Left cardiac atrium (tissue), 4 donors: ENCODE measurements at regions of chr20 and their contacts with region 1.

Region 1: DNA sequence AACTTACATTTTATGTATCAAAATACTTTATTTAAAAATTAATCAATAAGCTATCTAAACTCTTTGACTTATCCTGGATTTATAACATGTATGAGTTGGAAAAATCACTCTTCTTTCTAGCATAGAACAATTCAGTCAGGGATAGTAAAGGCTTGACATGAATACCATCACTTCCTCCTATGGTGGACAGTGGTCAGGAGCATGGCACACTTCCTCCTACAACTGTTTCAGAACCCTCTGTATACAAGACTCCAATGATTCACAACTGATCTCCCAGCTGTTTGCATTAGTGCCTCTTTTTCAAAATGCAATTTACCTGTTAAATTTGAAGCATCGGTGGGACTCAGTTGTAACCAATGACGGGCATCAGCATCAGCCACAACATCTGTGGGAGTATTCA is 129.7 kb downstream of the RALGAPA2 start:
- DNase-seq: no peak
- ATAC-seq: no peak

Region 2: DNA sequence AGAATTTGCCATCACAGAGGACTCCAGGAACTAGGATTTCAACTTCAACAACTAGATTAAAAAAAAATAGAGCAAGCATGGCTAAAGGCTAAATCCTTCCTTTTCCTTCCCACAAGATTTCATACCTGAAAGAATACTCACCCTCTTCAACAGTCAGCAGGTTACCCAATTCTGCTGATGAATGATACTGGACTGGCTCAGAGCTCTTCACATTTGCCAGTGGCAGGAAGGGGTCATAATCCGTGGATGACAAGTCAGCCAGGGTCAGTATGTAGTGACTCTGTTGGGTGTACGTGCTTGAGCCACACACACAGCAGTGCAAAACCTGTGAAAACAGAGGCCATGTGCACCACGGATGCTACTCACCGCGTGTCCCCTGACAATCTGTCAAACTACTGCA is 62.0 kb before region 1 on chr20:
- intact Hi-C with region 1: no loop called
- DNase-seq: no peak
- ATAC-seq: peak in 1 of 2 donors; percentile 47

Region 3: DNA sequence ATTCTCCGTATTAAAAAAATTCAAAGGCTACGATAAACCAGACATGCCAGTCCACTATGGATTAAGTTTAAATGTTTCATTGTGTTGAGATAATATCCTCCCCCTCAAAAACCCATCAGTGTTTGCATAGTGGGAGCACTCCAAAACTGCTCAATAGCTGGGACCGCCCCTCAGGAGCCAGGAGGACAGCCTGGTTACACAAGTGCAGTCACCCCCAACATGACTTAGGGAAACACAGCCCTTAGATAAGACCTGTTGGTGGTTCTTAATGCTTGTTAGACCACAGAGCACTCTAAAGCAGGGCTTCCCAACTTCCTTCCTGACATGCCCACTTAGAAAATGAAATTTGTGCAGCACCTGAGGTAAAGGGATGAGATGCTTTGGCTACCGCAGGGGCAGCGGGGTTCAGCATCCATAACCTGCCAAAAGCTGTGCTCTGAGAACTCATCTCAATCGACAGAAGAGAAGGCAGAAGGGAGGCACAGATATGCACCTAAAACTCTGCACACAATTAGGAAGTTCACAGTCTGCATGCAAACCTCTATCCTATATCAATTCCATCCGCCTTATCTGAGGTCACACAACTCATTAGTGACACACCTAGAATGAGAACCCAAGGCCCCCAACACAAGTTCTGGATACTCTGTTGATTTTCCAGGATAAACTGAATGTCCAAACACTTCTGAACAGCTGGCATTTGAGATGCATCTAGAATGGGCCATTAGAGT is 55.4 kb after region 1 on chr20:
- intact Hi-C with region 1: loop called in 1 of 2 experiments (anchors 10 kb)
- DNase-seq: no peak
- ATAC-seq: no peak

Region 4: DNA sequence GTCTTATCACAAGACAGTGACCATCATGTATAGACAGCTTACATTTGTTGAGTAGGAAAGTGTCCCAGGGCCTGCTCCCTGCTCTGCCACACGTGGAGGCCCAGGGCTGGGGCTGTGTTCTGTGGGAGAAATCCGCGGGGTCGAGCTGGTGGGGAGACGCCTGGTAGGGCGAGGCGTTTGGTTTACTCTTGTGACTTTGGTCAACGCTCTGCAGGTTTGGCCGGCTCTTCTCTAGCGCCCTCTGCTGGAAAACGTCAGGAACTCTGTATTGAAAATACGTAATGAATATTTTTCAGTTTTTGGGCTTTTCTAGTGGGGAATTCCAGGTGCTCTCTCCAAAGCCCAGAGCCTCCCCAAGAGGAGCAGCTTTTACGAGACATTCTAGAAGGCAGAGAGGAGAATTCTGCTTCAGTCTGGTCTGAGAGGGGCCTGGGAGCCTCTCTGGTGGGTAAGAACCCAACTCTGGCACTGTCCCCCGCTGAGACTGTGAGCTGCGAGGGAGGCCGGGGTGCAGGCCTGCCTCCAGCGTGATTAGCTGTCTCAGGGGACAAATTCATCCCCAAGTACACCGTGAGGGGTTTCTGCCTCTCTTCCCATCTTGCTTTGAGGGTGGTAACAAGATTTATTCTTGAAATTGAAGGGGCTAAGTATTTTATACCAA is 242.3 kb after region 1 on chr20:
- intact Hi-C with region 1: no loop called
- DNase-seq: peak; percentile 58
- ATAC-seq: peak; percentile 72